Activated T-helper 1 cell treated with anti-CD3 and anti-CD28 coated beads, Interleukin-12 subunit alpha, Interleukin-12 subunit beta, Interleukin-2, Interleukin-4 antibody, amounts not matched to agents 30 ng/mL and 10 ng/mL and 1 ng/mL, durations not matched to agents 14 hours and 24 hours and 36 hours (primary cell): ENCODE measurements at regions of chr19 and their contacts with region 1.

Region 1: DNA sequence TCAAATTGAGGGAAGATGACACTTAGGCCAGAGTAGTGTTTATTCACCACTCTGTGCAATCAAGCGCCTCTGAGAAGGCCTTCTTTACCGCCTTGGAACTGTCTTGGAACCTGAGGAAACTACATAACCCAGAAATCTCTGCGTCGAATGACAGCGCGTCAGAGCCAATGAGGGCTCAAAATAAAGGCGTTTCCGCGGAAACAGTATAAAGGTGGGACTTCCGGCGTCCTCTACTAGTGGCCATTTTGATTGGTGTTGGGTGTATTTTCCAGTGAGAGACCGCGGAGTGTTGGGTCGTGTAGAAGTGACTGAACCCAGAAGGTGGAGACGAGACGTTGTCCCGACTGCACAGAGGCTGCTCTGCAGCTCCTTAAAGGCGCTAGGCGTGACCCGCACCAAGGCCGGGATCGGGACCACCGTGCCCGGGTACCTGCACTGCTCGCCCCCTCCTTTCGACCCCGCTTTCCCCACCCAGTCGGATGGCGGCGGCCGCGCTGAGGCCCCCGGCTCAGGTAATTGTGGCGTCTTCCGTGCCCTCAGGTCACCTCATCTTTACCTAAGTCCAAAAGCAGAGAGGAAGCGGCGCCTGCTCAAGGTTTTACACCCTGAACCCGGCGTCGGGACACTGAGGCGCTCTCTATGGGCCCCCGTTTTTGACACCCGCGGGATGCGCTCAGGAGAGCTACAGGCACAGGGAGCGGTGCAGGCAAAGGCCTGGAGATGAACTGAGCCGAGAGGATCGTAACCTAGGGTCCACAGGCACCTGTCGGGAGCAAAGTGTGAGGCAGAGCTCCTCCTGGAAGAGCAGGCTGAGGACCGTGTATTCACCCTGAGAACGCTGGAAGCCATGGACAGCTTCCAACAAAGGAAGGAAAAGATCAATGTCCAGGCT is at the start of gene ZNF776:
- DNase-seq: peak; percentile 79
- H3K4me3 Mint-ChIP-seq: peak within 1 kb of the TSS; percentile 90
- H3K27ac Mint-ChIP-seq: peak within 1 kb of the TSS; percentile 93
- H3K4me1 Mint-ChIP-seq: peaks cover 12% of the 10 kb centered on the region
- H3K27me3 Mint-ChIP-seq: peaks cover 2% of the 10 kb centered on the region
- total RNA-seq, gene ZNF776: 6.8 and 6.9 TPM in 2 replicates

Region 2: GRCh38 chr19:57240311-57241090 is 506.3 kb before region 1 on chr19 and contains the start of gene ZNF805:
- intact Hi-C with region 1: loop called (anchors 2 kb)
- DNase-seq: peak; percentile 93
- H3K4me3 Mint-ChIP-seq: peak within 1 kb of the TSS; percentile 92
- H3K27ac Mint-ChIP-seq: peak within 1 kb of the TSS; percentile 97
- H3K4me1 Mint-ChIP-seq: peaks cover 14% of the 10 kb centered on the region
- H3K27me3 Mint-ChIP-seq: no peaks in the 10 kb centered on the region
- total RNA-seq, gene ZNF805: 6.9 and 8.4 TPM in 2 replicates

Region 3: DNA sequence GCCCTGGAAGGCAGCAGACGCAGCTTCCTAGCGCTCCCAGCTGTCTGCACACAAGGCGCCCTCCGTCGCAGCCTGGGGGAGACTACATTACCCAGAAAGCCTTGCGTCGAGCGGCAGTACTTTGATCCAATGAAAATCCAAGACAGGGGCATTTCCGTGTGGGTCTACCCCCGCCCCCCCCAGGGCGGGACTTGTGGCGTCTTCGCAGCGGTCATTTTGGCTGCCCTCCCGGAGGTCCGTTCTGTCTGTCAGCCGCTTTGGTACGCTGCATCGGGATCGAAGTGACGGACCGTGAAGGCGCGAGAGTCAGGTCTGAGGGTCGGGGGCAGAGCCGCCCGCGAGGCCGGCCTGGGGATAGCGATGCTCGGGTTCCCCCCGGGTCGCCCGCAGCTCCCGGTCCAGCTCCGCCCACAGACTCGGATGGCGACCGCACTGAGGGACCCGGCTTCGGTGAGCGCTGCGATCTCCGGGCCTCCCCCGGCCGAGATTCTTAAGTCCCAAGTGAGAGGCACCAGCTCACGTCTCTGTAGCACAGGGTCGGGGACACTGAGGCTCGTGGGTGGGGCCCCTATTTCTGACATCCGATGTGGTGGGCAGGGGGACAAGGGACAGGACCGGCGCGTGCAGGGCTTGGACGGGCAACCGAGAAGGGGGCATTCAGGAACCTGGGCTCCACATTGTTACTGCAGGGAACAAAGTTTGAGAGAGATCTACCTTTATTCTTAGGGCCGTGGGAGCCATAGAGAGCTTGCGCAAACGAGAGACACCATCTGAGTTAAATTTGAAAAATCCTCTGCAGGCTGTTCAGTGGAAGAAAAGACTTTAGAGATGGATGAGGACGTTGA is 113.6 kb before region 1 on chr19 and contains the start of gene ZNF211:
- intact Hi-C with region 1: loop called (anchors 1 kb)
- DNase-seq: peak; percentile 80
- H3K4me3 Mint-ChIP-seq: peak within 1 kb of the TSS; percentile 89
- H3K27ac Mint-ChIP-seq: peak within 1 kb of the TSS; percentile 78
- H3K4me1 Mint-ChIP-seq: peaks cover 19% of the 10 kb centered on the region
- H3K27me3 Mint-ChIP-seq: no peaks in the 10 kb centered on the region
- total RNA-seq, gene ZNF211: 8.3 and 8.4 TPM in 2 replicates

Region 4: DNA sequence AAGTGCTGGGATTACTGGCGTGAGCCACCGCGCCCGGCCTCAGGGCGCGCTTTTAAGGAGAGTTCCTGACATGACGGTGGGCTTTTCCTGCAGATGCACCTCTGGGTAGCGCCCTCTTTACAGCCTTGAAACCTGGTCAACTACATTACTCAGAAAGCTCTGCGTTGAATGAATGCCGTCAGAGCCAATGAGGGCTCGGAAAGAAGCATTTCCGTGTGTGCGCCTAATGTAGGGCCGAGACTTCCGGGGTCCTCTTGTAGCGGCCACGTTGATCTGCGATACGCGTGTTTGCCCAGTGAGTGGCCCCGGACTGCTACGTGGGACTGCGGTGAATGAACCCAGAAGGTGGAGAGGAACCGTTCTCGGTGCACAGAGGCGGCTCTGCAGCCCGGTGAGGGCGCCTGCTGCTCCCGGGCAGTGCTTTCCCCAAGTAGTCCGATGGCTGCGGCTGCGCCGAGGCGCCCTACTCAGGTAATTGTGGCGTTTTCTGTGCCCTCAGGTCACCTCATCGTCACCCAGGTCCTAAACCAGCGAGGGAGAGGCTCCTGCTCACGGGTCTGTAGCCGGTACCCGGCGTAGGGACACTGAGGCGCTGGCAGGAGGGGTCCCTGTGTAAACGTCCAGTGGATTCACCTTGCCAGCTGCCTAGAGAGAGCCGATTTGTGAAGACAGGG is 72.8 kb after region 1 on chr19:
- intact Hi-C with region 1: loop called (anchors 1 kb)
- DNase-seq: peak; percentile 76
- H3K4me3 Mint-ChIP-seq: peak overlapping the region; percentile 99
- H3K27ac Mint-ChIP-seq: peak overlapping the region; percentile 98
- H3K4me1 Mint-ChIP-seq: peaks cover 50% of the 10 kb centered on the region
- H3K27me3 Mint-ChIP-seq: no peaks in the 10 kb centered on the region

Region 5: DNA sequence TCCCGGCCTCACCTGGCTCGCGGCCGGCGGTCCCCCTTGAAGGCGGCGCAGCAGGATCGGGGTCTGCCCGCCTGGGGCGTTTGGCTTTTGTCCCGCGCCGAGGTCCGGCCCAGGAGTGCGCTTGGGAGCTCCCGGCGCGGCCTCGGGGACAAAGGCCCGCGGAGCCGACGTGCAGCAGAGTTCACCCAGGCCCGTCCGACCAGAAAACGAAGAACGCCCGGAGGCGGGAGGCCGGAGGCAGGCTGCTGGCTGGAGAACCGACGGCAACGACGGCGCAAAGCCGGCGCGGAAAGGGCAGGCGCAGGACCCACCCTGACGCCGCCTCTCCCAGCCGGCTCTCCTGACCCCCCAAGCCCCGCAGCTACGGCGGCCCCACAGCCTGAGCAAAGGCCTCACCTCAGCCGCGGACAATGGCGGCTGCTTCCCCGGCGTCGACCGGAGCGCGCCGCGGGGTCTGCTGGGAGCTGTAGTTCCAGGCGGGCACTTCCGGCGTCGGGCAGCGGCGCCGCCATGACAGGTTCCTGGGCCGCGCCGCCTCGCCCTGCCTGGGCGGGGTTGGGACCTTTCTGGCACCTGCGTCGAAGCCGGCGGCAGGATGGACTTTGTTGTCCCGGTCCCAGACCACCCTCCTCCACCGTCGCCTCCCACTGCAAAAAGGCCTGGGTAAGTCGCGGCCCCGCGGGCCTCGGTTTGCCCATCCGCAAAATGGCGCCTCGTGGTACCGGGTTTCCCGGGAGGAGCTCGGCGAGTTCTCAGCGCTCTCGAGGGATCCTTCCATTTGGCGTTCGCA is 255.8 kb after region 1 on chr19 and contains the start of gene ZNF606:
- intact Hi-C with region 1: loop called (anchors 1 kb)
- DNase-seq: peak; percentile 80
- H3K4me3 Mint-ChIP-seq: peak within 1 kb of the TSS; percentile 84
- H3K27ac Mint-ChIP-seq: peak within 1 kb of the TSS; percentile 67
- H3K4me1 Mint-ChIP-seq: peaks cover 20% of the 10 kb centered on the region
- H3K27me3 Mint-ChIP-seq: no peaks in the 10 kb centered on the region
- total RNA-seq, gene ZNF606: 6.3 and 6.4 TPM in 2 replicates